Spleen (tissue), 13 donors: ENCODE measurements at regions of chr9 and their contacts with region 1.

Region 1: DNA sequence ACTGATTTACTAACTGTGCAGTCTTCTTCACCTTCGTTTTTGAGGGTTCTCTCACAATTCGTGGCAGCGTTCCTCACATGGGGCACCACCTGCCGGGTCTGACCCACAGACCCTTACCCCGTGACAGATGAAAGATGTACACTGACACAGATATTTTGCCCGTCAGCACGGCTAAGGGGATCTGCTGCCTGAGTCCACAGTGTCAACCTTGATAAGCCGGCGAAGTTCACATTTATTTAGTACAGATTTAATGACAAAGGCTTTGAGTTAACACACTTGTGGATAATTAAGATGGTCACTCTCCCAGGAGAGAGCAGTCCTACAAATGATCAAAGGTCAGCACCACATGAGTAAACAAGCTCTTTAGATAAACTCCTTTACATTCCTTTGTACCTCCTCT is 15.9 kb upstream of the TEX10 start:
- DNase-seq: no peak
- H3K4me3 ChIP-seq: no peak overlapping the region
- H3K27ac ChIP-seq: no peak overlapping the region
- H3K4me1 ChIP-seq: no peaks in the 10 kb centered on the region
- H3K27me3 ChIP-seq: no peaks in the 10 kb centered on the region
- CTCF ChIP-seq: no peak
- POLR2A ChIP-seq: no peak

Region 2: GRCh38 chr9:99919930-99920329 is 448.7 kb before region 1 on chr9:
- intact Hi-C with region 1: no loop called
- DNase-seq: no peak
- H3K4me3 ChIP-seq: no peak overlapping the region
- H3K27ac ChIP-seq: no peak overlapping the region
- H3K4me1 ChIP-seq: peaks cover 0 to 12% (median 0%) of the 10 kb centered on the region in 6 donors
- H3K27me3 ChIP-seq: no peaks in the 10 kb centered on the region
- CTCF ChIP-seq: no peak
- POLR2A ChIP-seq: no peak

Region 3: DNA sequence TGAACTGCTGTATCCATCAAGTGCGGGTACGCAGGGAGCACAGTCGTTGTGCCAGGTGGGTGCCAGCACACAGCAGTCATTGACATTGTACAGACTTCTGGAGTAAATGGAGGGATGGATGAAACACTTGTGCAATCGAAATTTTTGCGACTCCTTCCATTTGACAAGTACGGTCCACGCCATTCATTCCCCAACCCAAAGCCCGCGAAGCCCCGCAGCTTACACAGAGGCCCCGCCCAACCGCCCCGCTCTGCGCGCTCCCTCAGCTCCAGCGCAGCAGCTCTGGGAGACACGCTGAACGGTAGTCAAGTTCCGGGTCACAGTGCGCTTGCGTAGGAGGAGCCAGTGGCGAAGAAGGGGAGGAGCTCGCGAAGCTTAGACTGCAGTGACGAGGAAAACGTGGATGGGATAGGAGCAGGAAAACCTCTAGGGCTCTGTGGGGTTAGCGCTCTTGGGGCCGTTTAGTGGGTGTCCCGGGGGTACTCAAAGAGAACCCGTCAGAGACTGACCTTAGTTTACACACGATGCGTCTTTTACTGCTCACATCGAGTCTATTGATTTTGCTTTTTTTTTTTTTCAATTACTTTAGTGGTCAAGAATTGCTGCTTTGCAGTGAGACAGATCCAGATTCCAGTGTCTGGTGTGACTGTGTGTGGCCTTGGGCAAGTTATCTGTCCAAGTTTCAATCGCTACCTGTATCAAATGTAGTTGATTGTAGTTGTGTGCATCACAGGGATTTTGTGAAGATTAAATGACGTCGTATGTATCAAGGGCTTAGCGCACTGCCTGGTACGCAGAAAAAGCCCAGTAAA is 43.0 kb after region 1 on chr9:
- intact Hi-C with region 1: loop called (anchors 10 kb)
- DNase-seq: peak; percentile 95
- H3K4me3 ChIP-seq: peak overlapping the region; percentile 28 to 76 (median 46)
- H3K27ac ChIP-seq: peak overlapping the region in 4 of 8 donors; percentile 9 to 70 (median 54)
- H3K4me1 ChIP-seq: peaks cover 0 to 23% (median 9%) of the 10 kb centered on the region in 6 donors
- H3K27me3 ChIP-seq: peaks cover 0 to 20% (median 0%) of the 10 kb centered on the region in 7 donors
- CTCF ChIP-seq: no peak
- POLR2A ChIP-seq: no peak